ENCODE measurements at regions of chr5 and their contacts with region 1.

Region 1: DNA sequence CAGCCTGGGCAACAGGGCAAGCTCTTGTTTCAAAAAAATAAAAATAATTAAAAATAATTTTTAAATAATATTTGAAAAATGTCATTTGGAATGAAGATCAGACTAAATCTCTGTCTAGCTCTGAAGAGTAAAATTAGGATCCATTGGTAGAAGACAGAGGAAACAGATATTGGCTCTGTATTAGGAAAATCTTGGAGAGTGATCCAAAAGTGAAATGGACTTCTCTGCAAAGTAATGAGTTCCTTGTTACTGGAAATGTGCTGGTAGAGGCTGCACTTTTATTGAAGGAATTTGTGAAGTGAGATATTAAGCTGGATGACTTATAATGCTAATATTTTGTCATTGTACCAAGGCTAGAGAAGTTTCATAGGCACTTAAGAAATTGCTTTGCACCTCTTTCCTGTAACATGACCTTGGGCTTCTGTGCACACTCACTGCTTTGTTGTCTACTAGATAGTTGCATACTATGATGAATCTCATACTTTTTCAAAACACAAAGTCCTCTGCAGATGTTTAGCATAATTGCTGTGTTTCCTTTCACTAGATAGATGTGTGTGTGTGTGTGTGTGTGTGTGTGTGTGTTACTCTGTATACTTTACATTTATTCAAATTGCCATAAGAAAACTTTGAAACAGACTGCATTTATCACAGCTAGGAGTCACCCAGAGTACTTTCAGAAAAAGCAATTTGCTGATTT is 13.1 kb downstream of the THBS4 start:
- DNase-seq: no peak
- H3K4me3 ChIP-seq: no peak overlapping the region
- H3K27ac ChIP-seq: no peak overlapping the region
- H3K4me1 ChIP-seq: no peaks in the 10 kb centered on the region
- H3K27me3 ChIP-seq: peaks cover 13% of the 10 kb centered on the region
- CTCF ChIP-seq: no peak

Region 2: DNA sequence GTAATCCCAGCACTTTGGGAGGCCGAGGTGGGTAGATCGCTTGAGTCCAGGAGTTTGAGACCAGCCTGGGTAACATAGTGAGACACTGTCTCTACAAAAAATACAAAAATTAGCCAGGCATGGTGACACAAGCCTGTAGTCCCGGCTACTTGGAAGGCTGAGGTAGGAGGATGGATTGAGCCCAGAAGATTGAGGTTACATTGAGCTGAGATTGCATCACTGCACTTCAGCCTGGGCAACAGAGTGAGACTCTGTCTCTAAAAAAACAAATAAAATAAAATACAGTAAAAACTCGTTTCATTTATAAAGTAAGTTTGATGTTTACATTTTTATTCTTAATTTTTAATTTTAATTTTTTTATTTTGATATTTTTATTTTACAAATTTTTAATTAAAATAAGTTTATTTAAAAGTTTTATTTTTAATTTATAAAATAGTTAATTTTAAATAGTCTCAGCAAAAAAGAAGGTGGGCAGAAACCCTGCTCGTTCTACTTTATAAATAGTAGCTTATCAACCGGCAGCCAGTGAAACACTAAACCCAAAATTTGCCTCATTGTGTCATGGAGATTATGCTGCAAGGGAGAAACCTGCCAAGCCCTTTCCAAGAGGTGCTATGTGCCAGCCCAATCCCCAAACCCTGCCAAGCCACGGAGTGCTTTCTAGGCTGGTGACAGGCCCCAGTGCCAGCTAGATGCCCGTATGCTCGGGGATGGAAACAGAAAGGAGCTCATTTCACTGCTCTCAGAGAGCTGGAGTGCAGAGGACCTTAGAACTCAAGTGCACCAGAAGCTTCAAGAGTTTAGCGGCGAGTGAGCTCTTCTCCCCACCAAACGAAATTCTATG is 168.7 kb after region 1 on chr5:
- CTCF ChIA-PET with region 1: no interaction called
- POLR2A ChIA-PET with region 1: interaction called, 12 read pairs
- intact Hi-C with region 1: no loop called
- DNase-seq: no peak
- H3K4me3 ChIP-seq: no peak overlapping the region
- H3K27ac ChIP-seq: no peak overlapping the region
- H3K4me1 ChIP-seq: no peaks in the 10 kb centered on the region
- H3K27me3 ChIP-seq: no peaks in the 10 kb centered on the region
- CTCF ChIP-seq: no peak